Left lung (tissue), 14 donors: ENCODE measurements at regions of chr17 and their contacts with region 1.

Region 1: DNA sequence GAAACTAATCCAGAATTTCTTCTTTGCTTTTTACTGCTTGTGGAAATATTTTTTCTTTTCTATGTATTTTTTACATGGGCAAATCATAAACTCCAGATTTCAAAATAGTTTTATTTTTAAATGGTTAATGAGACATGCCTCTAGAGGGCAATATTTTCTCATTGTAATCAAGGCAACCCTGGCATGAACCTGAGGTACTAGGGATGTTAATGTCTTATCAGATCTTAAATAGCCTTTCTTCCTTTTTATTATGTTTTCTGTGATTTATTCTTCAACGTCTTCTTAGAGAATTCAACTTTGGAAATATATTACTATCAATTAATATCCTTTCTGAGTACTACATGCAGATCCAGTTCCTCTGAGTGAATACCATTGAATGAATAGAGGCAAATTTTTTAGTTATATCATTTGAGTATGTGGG is 324.7 kb downstream of the BCAS3 start:
- DNase-seq: peak in 2 of 4 donors; percentile 36 to 51
- ATAC-seq: peak; percentile 79
- H3K4me3 ChIP-seq: no peak overlapping the region
- H3K27ac ChIP-seq: no peak overlapping the region
- H3K4me1 ChIP-seq: no peaks in the 10 kb centered on the region
- H3K27me3 ChIP-seq: no peaks in the 10 kb centered on the region
- CTCF ChIP-seq: peak in 1 of 2 donors; percentile 63

Region 2: GRCh38 chr17:61139219-61139618 is 136.9 kb after region 1 on chr17:
- intact Hi-C with region 1: loop called in 1 of 2 experiments (anchors 10 kb)
- DNase-seq: peak in 1 of 4 donors; percentile 47
- ATAC-seq: peak; percentile 84
- H3K4me3 ChIP-seq: no peak overlapping the region
- H3K27ac ChIP-seq: peak overlapping the region in 1 of 2 donors; percentile 62
- H3K4me1 ChIP-seq: peaks cover 9 to 20% of the 10 kb centered on the region in 2 donors
- H3K27me3 ChIP-seq: no peaks in the 10 kb centered on the region
- CTCF ChIP-seq: no peak

Region 3: GRCh38 chr17:61389670-61390478 is 387.5 kb after region 1 on chr17:
- intact Hi-C with region 1: loop called in 1 of 2 experiments (anchors 10 kb)
- DNase-seq: peak in 2 of 4 donors; percentile 57 to 89
- ATAC-seq: peak; percentile 83
- H3K4me3 ChIP-seq: no peak overlapping the region
- H3K27ac ChIP-seq: peak overlapping the region in 1 of 2 donors; percentile 6
- H3K4me1 ChIP-seq: peaks cover 0 to 9% of the 10 kb centered on the region in 2 donors
- H3K27me3 ChIP-seq: peaks cover 0 to 11% of the 10 kb centered on the region in 2 donors
- CTCF ChIP-seq: peak; percentile 78